ENCODE measurements at regions of chr1 and their contacts with region 1.

Region 1: GRCh38 chr1:47710329-47711071 is 272.7 kb downstream of the FOXD2 start:
- DNase-seq: peak; percentile 91
- CTCF ChIP-seq: peak; percentile 95

Region 2: DNA sequence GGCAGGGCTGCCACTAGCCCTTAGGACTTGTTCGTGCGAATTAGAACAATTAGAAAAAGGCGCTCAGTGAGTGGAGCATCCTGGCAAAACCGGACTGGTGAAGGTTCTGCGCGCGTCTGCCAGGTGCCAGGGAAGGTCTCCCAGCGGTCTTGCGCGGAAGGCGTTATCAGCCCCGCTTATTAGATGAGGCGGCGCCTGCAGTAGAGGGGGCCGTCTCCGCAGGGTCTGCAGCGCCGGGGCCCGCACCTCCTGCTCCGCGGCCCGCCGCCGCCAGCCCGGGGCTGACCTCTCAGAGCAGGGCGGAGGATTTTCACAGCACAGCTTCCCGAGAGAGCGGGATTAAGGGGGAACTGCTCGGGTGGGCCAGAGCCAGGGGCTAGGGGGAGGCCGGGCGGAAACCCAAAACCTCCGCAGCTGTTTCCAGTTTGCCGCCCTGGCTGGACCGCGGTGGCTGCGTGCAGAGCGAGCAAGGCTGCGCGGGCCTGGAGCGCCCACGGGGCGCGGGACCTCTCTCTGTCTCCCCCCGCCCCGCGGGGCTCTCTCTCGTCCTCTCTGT is 117.4 kb before region 1 on chr1:
- CTCF ChIA-PET with region 1: no interaction called
- POLR2A ChIA-PET with region 1: no interaction called
- DNase-seq: no peak
- CTCF ChIP-seq: no peak

Region 3: DNA sequence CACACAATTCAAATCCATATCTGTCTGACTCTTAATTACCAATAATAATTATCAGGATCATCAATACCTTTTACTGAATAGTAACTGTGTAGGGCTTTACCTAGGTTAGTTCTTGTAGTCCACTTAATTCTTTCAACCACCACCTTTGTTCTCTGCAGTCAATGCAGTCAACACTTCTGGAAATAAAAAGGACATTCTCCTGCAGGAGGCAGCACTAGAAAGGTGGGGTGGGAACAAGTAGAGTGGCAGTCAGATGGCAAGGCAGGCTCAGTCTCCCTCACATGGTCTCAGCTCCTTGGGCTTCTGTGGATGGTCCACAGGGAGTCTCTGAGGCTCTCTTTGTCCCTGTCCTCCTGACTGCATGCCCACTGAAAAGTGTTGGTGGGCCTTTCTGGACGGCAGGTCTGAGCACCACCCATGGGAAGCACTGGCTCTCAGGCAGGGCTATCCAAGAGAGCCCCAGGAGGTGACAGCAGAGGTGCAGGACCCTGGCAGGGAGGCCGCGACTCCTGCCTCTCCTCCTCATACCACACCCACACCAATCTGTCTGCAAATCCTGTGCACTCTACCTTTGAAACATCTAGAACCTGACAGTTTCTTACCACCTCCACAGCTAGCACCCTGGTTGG is 35.3 kb before region 1 on chr1:
- CTCF ChIA-PET with region 1: no interaction called
- POLR2A ChIA-PET with region 1: no interaction called
- DNase-seq: no peak
- CTCF ChIP-seq: no peak

Region 4: GRCh38 chr1:47696740-47697441 is 13.6 kb before region 1 on chr1:
- CTCF ChIA-PET with region 1: interaction called, 11 read pairs
- POLR2A ChIA-PET with region 1: no interaction called
- DNase-seq: no peak
- CTCF ChIP-seq: no peak

Measured in GM10248 (cell line).